GM12878 (cell line): ENCODE measurements at regions of chr11 and their contacts with region 1.

Region 1: GRCh38 chr11:102317099-102317767 is at the start of gene BIRC3:
- DNase-seq: peak; percentile 100
- ATAC-seq: peak; percentile 75
- H3K4me3 ChIP-seq: peak within 1 kb of the TSS; percentile 76
- H3K27ac ChIP-seq: peak within 1 kb of the TSS; percentile 97
- H3K4me1 ChIP-seq: peaks cover 24% of the 10 kb centered on the region
- H3K27me3 ChIP-seq: no peaks in the 10 kb centered on the region
- CTCF ChIP-seq: peak in 2 of 3 experiments; percentile 14 to 20; a peak in 2 of 6 replicates
- EP300 ChIP-seq: peak; percentile 99
- POLR2A ChIP-seq: peak; percentile 99
- RAD21 ChIP-seq: no peak
- polyA plus RNA-seq, gene BIRC3: 63.8 to 92.9 TPM

Region 2: DNA sequence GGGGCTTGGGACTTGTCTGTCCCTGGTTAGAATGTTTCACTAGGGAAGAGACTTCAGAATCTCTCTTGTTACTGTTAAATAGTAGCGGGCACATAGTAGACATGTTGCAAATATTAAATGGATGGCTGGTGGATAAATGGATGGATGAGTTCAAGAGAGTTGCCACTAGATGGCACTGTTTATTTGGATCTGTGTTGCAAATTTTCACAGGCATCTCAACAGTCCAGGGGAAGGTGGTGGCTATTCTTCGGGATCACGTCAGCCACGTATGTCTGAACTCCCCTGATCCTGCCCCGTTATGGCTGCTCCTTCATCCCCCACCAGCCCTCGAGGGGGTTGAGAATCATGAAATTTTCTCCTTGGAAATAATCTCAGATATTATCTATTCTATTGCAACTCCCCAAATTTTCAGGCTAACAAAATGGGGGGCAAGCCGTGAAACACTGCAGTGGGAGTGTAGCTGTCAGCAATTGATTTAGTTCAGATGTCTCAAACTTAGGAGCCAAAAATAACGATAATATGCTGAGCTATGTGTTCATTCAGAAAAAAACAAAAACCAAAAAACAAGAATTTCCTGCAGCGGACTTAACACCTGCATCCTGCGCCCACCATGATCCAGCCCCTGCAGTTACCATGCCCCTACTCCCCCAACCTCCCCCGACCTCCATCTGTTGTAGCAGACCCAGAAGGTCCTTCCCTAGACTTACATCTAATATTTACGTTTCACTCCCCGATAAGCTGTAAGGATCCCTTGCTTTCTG is 29.1 kb before region 1 on chr11:
- CTCF ChIA-PET with region 1: interaction called, 219 read pairs
- POLR2A ChIA-PET with region 1: interaction called, 10 read pairs
- RAD21 ChIA-PET with region 1: interaction called, 61 read pairs
- SMC1A ChIA-PET with region 1: interaction called, 255 read pairs
- in situ Hi-C with region 1: no loop called
- intact Hi-C with region 1: no loop called
- DNase-seq: peak; percentile 78
- ATAC-seq: peak; percentile 94
- H3K4me3 ChIP-seq: peak overlapping the region; percentile 43; the same call in 1 of the 2 replicates
- H3K27ac ChIP-seq: no peak overlapping the region
- H3K4me1 ChIP-seq: no peaks in the 10 kb centered on the region
- H3K27me3 ChIP-seq: no peaks in the 10 kb centered on the region
- CTCF ChIP-seq: peak; percentile 62 to 83 (median 67)
- EP300 ChIP-seq: no peak
- POLR2A ChIP-seq: no peak
- RAD21 ChIP-seq: peak; percentile 84

Region 3: DNA sequence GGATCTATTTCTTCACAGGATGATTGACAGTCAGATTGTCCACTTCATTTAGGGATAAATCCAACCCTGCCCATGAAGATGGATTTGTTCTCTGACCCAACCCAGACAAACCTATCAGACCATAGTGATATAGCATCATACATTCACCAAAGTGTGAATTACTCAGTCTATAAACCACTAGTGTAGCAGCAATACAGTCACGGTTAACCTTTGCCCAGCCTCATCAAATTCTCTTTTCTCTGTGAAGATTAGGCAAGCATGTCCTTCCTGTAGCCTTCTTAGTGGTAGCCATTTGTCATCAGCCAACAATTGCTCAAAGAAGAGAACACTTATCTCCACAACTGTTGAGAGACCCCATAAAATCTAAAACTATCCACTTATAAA is 15.4 kb after region 1 on chr11:
- CTCF ChIA-PET with region 1: interaction called, 5 read pairs
- POLR2A ChIA-PET with region 1: interaction called, 10 read pairs
- RAD21 ChIA-PET with region 1: interaction called, 5 read pairs
- SMC1A ChIA-PET with region 1: interaction called, 8 read pairs
- in situ Hi-C with region 1: no loop called
- intact Hi-C with region 1: no loop called
- DNase-seq: no peak
- ATAC-seq: peak; percentile 32
- H3K4me3 ChIP-seq: no peak overlapping the region
- H3K27ac ChIP-seq: no peak overlapping the region
- H3K4me1 ChIP-seq: no peaks in the 10 kb centered on the region; the same call in 1 of the 2 replicates
- H3K27me3 ChIP-seq: no peaks in the 10 kb centered on the region
- CTCF ChIP-seq: no peak
- EP300 ChIP-seq: no peak
- POLR2A ChIP-seq: 0 out of 2 replicates have a peak, but pooled peaks have one; percentile 2
- RAD21 ChIP-seq: no peak

Region 4: GRCh38 chr11:102430158-102430836 is 113.1 kb after region 1 on chr11:
- CTCF ChIA-PET with region 1: no interaction called
- POLR2A ChIA-PET with region 1: interaction called, 4 read pairs
- RAD21 ChIA-PET with region 1: interaction called, 4 read pairs
- SMC1A ChIA-PET with region 1: interaction called, 3 read pairs
- in situ Hi-C with region 1: no loop called
- intact Hi-C with region 1: loop called (anchors 5 kb)
- DNase-seq: peak; percentile 99
- ATAC-seq: peak; percentile 90
- H3K4me3 ChIP-seq: peak overlapping the region; percentile 53
- H3K27ac ChIP-seq: peak overlapping the region; percentile 91
- H3K4me1 ChIP-seq: peaks cover 35% of the 10 kb centered on the region
- H3K27me3 ChIP-seq: no peaks in the 10 kb centered on the region
- CTCF ChIP-seq: no peak
- EP300 ChIP-seq: peak; percentile 76 to 82; a peak in 2 of 4 replicates
- POLR2A ChIP-seq: no peak
- RAD21 ChIP-seq: no peak; the same call in 1 of the 2 replicates

Region 5: DNA sequence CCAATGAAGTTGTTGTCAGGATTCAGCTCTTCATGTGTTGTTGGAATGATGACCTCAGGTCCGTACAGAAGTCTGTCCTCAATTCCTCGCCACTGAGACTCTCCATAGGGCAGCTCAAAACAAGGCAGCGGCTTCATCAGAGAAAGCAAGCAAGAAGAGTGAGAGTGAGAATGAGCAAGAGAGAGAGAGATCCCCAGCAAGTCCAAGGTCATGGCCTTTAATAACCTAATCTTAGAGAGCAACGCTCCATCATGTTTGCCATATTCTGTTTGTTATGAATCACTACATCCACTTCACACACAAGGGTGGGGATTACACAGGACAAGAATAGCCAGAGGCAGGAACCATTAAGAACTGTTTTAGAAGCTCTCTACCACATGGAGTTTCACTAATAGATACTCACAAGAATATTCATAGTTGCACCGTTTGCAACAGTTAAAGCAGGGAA is 236.6 kb after region 1 on chr11:
- CTCF ChIA-PET with region 1: interaction called, 3 read pairs
- POLR2A ChIA-PET with region 1: no interaction called
- RAD21 ChIA-PET with region 1: interaction called, 10 read pairs
- SMC1A ChIA-PET with region 1: interaction called, 5 read pairs
- in situ Hi-C with region 1: no loop called
- intact Hi-C with region 1: no loop called
- DNase-seq: peak; percentile 78
- ATAC-seq: peak; percentile 85
- H3K4me3 ChIP-seq: no peak overlapping the region
- H3K27ac ChIP-seq: peak overlapping the region; percentile 40; the same call in 1 of the 2 replicates
- H3K4me1 ChIP-seq: peaks cover 40% of the 10 kb centered on the region
- H3K27me3 ChIP-seq: no peaks in the 10 kb centered on the region
- CTCF ChIP-seq: no peak
- EP300 ChIP-seq: peak; percentile 70 to 79; a peak in 3 of 4 replicates
- POLR2A ChIP-seq: no peak
- RAD21 ChIP-seq: peak; percentile 30; the same call in 1 of the 2 replicates

Region 6: GRCh38 chr11:102560555-102561011 is 243.3 kb after region 1 on chr11:
- CTCF ChIA-PET with region 1: interaction called, 3 read pairs
- POLR2A ChIA-PET with region 1: no interaction called
- RAD21 ChIA-PET with region 1: no interaction called
- SMC1A ChIA-PET with region 1: interaction called, 4 read pairs
- in situ Hi-C with region 1: no loop called
- intact Hi-C with region 1: loop called (anchors 5 kb)
- DNase-seq: peak; percentile 84
- ATAC-seq: peak; percentile 85
- H3K4me3 ChIP-seq: no peak overlapping the region; the same call in 1 of the 2 replicates
- H3K27ac ChIP-seq: peak overlapping the region; percentile 86
- H3K4me1 ChIP-seq: peaks cover 56% of the 10 kb centered on the region
- H3K27me3 ChIP-seq: no peaks in the 10 kb centered on the region
- CTCF ChIP-seq: no peak
- EP300 ChIP-seq: peak; percentile 88 to 97
- POLR2A ChIP-seq: no peak
- RAD21 ChIP-seq: peak; percentile 12; the same call in 1 of the 2 replicates